AG04450 (cell line): ENCODE measurements at regions of chr6 and their contacts with region 1.

Region 1: GRCh38 chr6:44246663-44247337 is at the start of gene HSP90AB1:
- DNase-seq: peak; percentile 96
- H3K4me3 ChIP-seq: peak within 1 kb of the TSS; percentile 91
- H3K27ac ChIP-seq: peak within 1 kb of the TSS; percentile 84
- H3K27me3 ChIP-seq: no peaks in the 10 kb centered on the region
- CTCF ChIP-seq: no peak
- polyA plus RNA-seq, gene HSP90AB1: 792 and 943 TPM in 2 replicates

Region 2: DNA sequence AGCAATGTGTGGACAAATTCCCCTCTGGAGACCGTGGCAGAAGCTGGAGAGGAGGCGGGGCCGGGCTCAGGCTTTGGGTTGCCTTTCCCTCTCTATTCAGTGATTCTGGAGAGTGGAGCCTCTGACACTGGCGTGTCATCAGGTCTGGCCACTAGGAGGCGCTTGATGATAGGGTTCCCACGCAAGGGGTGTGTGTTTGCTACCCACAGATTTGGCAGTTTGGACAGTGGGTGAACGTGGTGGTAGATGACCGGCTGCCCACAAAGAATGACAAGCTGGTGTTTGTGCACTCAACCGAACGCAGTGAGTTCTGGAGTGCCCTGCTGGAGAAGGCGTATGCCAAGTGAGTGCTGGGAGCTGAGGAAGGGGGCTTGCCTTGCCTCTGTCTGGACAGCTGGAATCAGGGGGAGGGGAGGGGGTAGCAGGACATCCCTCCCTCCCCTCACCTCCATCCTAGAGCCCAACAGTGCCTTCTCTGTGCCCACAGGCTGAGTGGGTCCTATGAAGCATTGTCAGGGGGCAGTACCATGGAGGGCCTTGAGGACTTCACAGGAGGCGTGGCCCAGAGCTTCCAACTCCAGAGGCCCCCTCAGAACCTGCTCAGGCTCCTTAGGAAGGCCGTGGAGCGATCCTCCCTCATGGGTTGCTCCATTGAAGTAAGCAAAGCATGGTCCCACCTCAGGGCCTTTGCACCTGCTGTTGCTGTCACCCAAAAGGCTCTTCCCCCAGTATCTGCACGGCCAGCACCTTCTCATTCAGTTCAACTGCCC is 73.9 kb before region 1 on chr6:
- CTCF ChIA-PET with region 1: interaction called, 6 read pairs
- POLR2A ChIA-PET with region 1: interaction called, 13 read pairs
- DNase-seq: peak; percentile 27
- H3K4me3 ChIP-seq: no peak overlapping the region
- H3K27ac ChIP-seq: no peak overlapping the region
- H3K27me3 ChIP-seq: peaks cover 19% of the 10 kb centered on the region
- CTCF ChIP-seq: peak; percentile 89

Region 3: DNA sequence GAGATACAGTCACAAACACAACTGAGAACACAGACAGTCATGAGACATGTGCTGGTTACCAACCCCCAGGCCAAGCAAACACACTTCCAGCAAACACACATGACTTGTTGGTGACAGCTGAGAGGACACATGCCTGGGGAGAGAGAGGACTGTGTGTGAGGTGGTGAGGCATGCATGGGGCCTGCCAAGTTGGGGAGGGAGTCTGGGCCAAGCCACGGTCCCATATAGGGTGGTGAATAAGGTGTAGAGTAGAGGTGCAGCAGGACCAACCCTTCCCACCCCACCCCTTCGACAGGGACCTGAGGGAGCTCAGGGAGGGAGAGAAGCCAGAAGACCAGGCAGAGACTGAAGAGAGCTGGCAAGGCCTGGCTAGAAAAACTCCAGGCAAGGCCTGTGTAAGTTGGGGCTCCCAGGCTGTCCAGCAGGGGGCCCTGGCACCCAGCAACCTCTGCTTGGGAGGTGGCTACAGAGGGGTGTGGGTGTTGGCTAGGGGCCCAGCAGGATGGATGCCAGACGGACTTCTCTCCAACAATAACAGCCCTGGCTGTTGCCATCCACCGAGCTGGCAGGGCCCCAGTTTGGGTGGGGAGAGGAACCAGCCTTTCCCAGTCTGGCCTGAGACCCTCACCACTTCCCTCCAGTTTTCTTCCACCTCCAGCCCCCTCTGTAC is 25.4 kb before region 1 on chr6:
- CTCF ChIA-PET with region 1: no interaction called
- POLR2A ChIA-PET with region 1: interaction called, 23 read pairs
- DNase-seq: no peak
- H3K4me3 ChIP-seq: no peak overlapping the region
- H3K27ac ChIP-seq: no peak overlapping the region
- H3K27me3 ChIP-seq: no peaks in the 10 kb centered on the region
- CTCF ChIP-seq: peak; percentile 71

Region 4: DNA sequence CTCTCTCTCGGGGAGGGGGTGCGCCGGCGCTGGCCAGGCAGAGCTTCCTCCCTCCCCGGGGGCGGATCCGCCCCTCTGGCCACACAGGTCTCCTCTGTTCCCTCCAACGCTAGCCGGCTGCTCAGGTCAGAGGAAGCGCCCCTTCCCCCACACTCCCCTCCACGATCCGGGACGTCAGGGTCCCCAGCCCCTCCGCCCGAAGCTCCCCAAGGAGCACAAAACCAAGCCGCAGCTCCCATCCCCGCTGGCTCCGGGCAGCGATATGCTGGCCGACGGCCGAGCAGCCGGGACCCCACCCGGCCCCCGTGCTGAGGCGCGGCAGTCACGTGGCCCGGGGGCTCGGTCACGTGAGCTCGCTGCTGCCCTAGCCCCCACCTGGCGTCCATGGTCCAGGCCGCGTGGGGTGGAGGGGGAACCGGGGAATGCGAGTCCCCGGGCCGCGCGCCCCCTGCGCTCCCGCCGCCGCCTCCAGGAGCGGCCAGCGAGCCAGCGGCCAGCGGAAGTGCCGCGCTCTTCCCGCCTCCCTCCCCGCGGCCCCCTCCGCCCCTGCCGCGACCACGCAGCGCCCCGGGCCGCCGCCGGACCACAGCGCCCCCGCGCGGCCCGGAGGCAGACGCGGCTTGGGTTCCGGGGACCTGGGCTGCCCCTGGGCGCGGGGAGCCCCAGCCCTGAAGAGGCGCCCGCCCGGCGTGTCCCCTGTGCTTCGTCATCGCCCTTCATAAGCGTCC is 10.4 kb after region 1 on chr6 and contains the start of gene SLC35B2:
- CTCF ChIA-PET with region 1: interaction called, 10 read pairs
- POLR2A ChIA-PET with region 1: interaction called, 107 read pairs
- DNase-seq: no peak
- H3K4me3 ChIP-seq: peak within 1 kb of the TSS; percentile 95
- H3K27ac ChIP-seq: peak within 1 kb of the TSS; percentile 65
- H3K27me3 ChIP-seq: no peaks in the 10 kb centered on the region
- CTCF ChIP-seq: peak; percentile 43
- polyA plus RNA-seq, gene SLC35B2: 83.5 and 107 TPM in 2 replicates